Mammary epithelial cell (primary cell): ENCODE measurements at regions of chr14 and their contacts with region 1.

Region 1: GRCh38 chr14:83463500-83464098 is 1929.9 kb upstream of the SEL1L start:
- DNase-seq: peak; percentile 34
- H3K4me3 ChIP-seq: no peak overlapping the region
- H3K27ac ChIP-seq: no peak overlapping the region
- H3K4me1 ChIP-seq: no peaks in the 10 kb centered on the region
- H3K27me3 ChIP-seq: no peaks in the 10 kb centered on the region
- CTCF ChIP-seq: peak; percentile 73 to 74

Region 2: GRCh38 chr14:82710267-82710841 is 753.2 kb before region 1 on chr14:
- CTCF ChIA-PET with region 1: no interaction called
- dilution Hi-C with region 1: no loop called
- in situ Hi-C with region 1: no loop called
- intact Hi-C with region 1: loop called (anchors 10 kb)
- DNase-seq: peak; percentile 16
- H3K4me3 ChIP-seq: no peak overlapping the region
- H3K27ac ChIP-seq: no peak overlapping the region
- H3K4me1 ChIP-seq: no peaks in the 10 kb centered on the region
- H3K27me3 ChIP-seq: no peaks in the 10 kb centered on the region
- CTCF ChIP-seq: peak; percentile 70 to 78

Region 3: DNA sequence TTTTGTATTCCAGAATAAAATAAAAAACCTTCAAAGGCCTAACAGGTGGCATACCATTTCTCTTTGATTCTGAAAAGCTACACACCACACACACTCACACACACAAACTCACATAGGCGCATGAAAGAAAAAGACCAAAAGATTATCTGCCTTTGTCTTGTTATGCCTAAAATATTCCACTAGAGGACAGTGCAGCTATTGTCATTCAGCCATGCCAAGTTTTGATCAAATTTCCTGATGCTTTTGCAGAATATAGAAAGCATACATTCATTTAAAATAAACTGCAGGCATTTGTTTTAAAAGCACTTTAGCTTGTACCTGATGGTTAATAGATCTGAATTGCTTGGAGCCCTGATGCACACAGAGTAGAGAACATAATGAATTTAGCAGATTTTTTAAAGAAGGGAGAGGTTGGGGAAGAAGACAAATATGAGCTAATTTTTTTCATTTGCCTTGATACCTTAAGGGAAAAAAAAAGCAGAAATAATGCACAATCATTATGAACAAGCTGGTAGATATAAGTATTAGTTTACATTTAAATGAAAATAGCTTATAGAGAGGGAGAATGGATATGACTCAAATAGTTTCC is 163.0 kb before region 1 on chr14:
- CTCF ChIA-PET with region 1: no interaction called
- dilution Hi-C with region 1: no loop called
- in situ Hi-C with region 1: loop called in 1 of 2 experiments (anchors 5 kb)
- intact Hi-C with region 1: loop called (anchors 1 kb)
- DNase-seq: peak; percentile 21
- H3K4me3 ChIP-seq: no peak overlapping the region
- H3K27ac ChIP-seq: no peak overlapping the region
- H3K4me1 ChIP-seq: no peaks in the 10 kb centered on the region
- H3K27me3 ChIP-seq: no peaks in the 10 kb centered on the region
- CTCF ChIP-seq: peak; percentile 93 to 98